MCF 10A (cell line): ENCODE measurements at regions of chr17 and their contacts with region 1.

Region 1: GRCh38 chr17:45148183-45149036 is at the start of gene HEXIM1:
- DNase-seq: peak; percentile 99
- H3K4me3 Mint-ChIP-seq: peak within 1 kb of the TSS; percentile 97
- H3K27ac Mint-ChIP-seq: peak within 1 kb of the TSS; percentile 100
- H3K4me1 Mint-ChIP-seq: peaks cover 23% of the 10 kb centered on the region
- H3K27me3 Mint-ChIP-seq: no peaks in the 10 kb centered on the region
- CTCF ChIP-seq: no peak
- total RNA-seq, gene HEXIM1: 22.5 and 26.7 TPM in 2 replicates

Region 2: DNA sequence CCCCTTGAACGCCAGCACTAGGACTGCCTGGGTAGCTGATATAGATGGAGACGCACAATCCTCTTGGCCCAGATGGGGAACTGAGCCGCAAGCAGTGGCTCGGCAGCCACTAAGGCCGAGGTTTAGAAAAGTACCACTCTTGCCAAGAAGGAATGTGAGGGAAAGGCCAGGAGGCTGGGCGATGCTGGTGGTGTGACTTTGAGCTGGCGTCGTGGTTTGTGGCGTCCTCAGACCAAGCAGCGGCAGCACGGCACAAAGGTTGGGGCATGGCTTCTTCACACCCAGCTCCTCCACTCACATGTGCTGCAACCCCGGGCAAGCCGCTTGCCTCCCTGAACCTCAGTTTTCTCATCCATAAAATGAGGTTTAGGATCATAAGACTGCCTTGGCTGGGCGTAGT is 112.6 kb before region 1 on chr17:
- CTCF ChIA-PET with region 1: no interaction called
- POLR2A ChIA-PET with region 1: no interaction called
- intact Hi-C with region 1: no loop called
- DNase-seq: no peak
- H3K4me3 Mint-ChIP-seq: no peak overlapping the region
- H3K27ac Mint-ChIP-seq: no peak overlapping the region
- H3K4me1 Mint-ChIP-seq: no peaks in the 10 kb centered on the region
- H3K27me3 Mint-ChIP-seq: no peaks in the 10 kb centered on the region
- CTCF ChIP-seq: no peak

Region 3: DNA sequence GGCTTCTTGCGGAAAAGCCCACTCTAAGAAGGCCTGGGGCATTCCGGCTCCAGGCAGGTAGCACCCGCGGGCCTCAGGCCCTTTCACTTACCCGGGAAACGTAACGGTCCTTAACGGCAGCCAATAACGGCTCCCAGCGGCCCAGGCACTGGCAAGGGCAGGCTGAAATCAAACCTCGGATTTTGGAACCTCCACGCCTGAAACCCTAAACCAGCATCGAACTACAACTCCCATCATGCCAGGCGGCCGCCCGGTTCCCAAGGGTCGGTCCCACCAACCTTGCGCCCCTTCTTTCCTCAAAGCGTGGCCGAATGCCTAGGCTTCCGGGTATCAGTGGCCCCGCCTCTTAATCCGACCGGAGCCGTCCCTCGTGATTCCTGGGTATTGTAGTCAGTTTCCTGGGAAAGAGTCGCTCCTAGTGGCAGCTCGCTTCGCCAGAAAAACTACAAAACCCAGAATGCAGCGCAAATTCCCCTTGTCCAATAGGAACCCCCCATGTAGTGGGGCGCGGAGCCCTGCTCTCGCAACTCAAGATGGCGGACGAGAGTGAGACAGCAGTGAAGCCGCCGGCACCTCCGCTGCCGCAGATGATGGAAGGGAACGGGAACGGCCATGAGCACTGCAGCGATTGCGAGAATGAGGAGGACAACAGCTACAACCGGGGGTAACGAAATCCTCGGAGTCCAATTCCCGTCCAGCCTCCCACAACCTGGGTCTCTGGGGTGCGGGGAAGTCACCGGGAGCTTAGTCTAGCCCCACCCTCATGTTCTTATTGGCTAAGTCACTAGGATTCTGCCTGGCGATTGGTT is 87.4 kb before region 1 on chr17 and contains the start of gene NMT1:
- CTCF ChIA-PET with region 1: interaction called, 3 read pairs
- POLR2A ChIA-PET with region 1: interaction called, 16 read pairs
- intact Hi-C with region 1: no loop called
- DNase-seq: peak; percentile 100
- H3K4me3 Mint-ChIP-seq: peak within 1 kb of the TSS; percentile 84
- H3K27ac Mint-ChIP-seq: peak within 1 kb of the TSS; percentile 94
- H3K4me1 Mint-ChIP-seq: peaks cover 5% of the 10 kb centered on the region
- H3K27me3 Mint-ChIP-seq: no peaks in the 10 kb centered on the region
- CTCF ChIP-seq: no peak
- total RNA-seq, gene NMT1: 85.3 and 89.7 TPM in 2 replicates

Region 4: DNA sequence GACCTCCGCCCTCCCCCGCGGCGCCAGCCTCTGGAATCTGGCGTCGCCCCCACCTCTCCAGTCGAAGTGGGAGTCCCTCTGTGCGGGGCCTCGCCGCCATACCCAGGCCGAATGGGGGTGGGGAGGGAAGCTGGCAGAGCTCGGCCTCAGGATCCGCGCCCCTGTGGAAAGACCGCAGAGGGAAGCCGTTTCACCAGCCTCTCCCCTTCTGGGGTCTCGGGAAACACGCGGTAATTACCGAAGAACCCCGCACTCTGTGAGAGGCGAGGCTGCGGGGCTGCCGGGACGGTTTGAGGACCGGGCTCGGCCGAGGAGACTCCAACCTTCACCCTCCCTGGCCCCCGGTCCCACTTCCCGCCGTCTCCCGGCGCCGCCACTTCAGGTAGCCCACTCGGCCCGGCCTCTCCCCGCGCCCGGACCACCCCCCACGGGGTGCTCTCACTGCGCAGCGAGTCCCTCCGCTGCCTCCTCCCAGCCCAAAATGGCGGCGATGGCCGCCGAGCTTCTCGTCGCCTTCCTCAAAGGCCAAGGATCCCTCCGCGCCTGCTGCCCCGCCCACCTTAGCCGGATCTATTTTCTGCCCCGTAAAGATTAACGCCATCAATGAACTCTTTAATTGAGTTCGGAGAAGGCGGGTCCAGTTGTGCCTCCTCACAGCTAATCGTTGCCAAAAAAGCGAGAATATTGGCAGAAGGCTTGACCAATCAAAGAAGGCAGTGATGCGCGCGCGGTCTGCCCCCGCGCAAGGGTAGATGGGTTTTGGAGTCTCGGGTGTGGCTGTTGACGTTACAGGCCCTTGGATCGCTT is 12.8 kb after region 1 on chr17:
- CTCF ChIA-PET with region 1: interaction called, 83 read pairs
- POLR2A ChIA-PET with region 1: interaction called, 1,083 read pairs
- intact Hi-C with region 1: loop called (anchors 1 kb)
- DNase-seq: peak; percentile 100
- H3K4me3 Mint-ChIP-seq: peak overlapping the region; percentile 98
- H3K27ac Mint-ChIP-seq: peak overlapping the region; percentile 99
- H3K4me1 Mint-ChIP-seq: peaks cover 18% of the 10 kb centered on the region
- H3K27me3 Mint-ChIP-seq: no peaks in the 10 kb centered on the region
- CTCF ChIP-seq: no peak

Region 5: GRCh38 chr17:45197555-45198334 is 49.3 kb after region 1 on chr17:
- CTCF ChIA-PET with region 1: interaction called, 200 read pairs
- POLR2A ChIA-PET with region 1: interaction called, 396 read pairs
- intact Hi-C with region 1: loop called (anchors 1 kb)
- DNase-seq: peak; percentile 91
- H3K4me3 Mint-ChIP-seq: no peak overlapping the region
- H3K27ac Mint-ChIP-seq: peak overlapping the region; percentile 19
- H3K4me1 Mint-ChIP-seq: peaks cover 10% of the 10 kb centered on the region
- H3K27me3 Mint-ChIP-seq: no peaks in the 10 kb centered on the region
- CTCF ChIP-seq: peak; percentile 99

Region 6: DNA sequence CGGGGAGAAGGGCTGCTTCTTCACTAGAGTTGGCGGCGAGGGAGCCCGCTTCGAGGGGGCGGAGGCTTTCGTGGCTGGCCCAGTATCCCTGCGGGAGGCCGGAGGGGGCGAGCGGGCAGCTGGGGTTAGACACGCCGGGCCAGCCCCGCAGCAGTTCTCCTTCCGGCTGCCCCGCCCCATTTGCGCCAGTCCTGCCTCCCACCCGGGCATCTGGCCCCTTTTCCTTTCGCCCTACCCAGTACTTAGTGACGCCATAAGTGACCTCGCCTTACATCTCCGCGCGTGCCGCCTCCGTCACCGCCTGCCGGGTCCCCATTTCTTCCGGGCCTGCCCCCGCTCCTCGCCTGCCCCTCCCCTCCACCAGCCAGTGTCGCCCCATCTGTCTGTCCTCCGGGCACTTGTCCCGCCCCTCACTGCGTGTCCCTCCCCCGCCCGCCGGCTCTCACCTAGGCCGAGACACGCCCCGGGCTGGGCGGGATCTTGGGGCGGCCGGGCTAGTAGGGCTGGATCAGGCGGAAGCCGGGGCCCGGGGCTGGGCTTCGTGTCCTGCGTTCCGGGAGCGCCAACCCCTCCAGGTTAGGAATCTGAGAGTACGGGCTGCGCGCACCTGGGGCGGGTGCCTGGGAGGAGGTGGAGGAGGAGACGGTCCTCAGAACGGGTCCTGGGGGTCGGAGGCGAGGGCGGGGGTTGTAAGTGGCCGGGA is 99.2 kb after region 1 on chr17:
- CTCF ChIA-PET with region 1: interaction called, 4 read pairs
- POLR2A ChIA-PET with region 1: interaction called, 12 read pairs
- intact Hi-C with region 1: no loop called
- DNase-seq: peak; percentile 97
- H3K4me3 Mint-ChIP-seq: peak overlapping the region; percentile 96
- H3K27ac Mint-ChIP-seq: peak overlapping the region; percentile 80
- H3K4me1 Mint-ChIP-seq: peaks cover 20% of the 10 kb centered on the region
- H3K27me3 Mint-ChIP-seq: no peaks in the 10 kb centered on the region
- CTCF ChIP-seq: no peak

Region 7: GRCh38 chr17:45584092-45585036 is 436.0 kb after region 1 on chr17:
- CTCF ChIA-PET with region 1: no interaction called
- POLR2A ChIA-PET with region 1: interaction called, 15 read pairs
- intact Hi-C with region 1: no loop called
- DNase-seq: peak; percentile 81
- H3K4me3 Mint-ChIP-seq: peak overlapping the region; percentile 77
- H3K27ac Mint-ChIP-seq: peak overlapping the region; percentile 76
- H3K4me1 Mint-ChIP-seq: peaks cover 23% of the 10 kb centered on the region
- H3K27me3 Mint-ChIP-seq: no peaks in the 10 kb centered on the region
- CTCF ChIP-seq: no peak